ENCODE measurements at regions of chr16 and their contacts with region 1.

Region 1: DNA sequence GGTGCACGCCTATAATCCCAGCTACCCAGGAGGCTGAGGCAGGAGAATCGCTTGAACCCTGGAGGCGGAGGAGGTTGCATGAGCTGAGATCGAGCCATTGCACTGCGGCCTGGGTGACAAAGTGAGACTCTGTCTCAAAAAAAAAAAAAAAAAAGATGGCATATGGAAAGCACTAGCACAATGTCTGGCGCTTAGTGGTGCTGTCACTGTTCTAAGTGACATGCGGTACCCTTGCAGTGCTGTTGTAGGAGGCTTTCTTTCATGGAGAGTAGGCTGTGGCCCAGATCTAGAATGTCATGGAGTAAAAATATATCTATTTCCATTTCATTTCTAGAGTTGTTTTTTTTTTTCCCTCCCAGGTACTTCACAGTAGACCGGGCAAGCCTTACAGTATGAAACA is 14.6 kb upstream of the METTL9 start:
- DNase-seq: no peak
- ATAC-seq: no peak
- H3K4me3 ChIP-seq: no peak overlapping the region
- H3K4me3 Mint-ChIP-seq: no peak overlapping the region
- H3K27ac ChIP-seq: no peak overlapping the region
- H3K27ac Mint-ChIP-seq: no peak overlapping the region
- H3K4me1 ChIP-seq: peaks cover 6% of the 10 kb centered on the region
- H3K4me1 Mint-ChIP-seq: peaks cover 5% of the 10 kb centered on the region
- H3K27me3 ChIP-seq: no peaks in the 10 kb centered on the region
- H3K27me3 Mint-ChIP-seq: no peaks in the 10 kb centered on the region
- CTCF ChIP-seq: no peak

Region 2: DNA sequence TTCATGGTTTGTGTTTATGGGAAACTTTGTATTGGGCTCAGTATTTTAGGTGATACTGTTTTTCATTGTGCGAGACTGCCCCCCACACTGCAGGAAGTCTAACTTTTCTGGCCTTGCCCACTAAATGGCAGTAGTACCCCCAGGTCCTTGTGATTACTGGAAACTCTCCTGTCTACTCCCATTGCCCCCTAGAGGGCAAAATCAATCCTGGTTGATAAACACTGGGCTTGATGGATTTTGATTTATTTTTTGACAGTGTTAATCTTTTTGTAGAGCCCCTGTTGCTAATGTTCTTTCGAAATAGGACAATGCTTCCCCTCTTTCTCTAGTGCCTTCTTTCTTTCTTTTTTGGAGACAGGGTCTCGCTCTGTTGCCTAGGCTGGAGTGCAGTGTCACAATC is 30.1 kb after region 1 on chr16:
- CTCF ChIA-PET with region 1: interaction called, 3 read pairs
- POLR2A ChIA-PET with region 1: no interaction called
- intact Hi-C with region 1: loop called in 1 of 2 experiments (anchors 2 kb)
- DNase-seq: no peak
- ATAC-seq: no peak
- H3K4me3 ChIP-seq: no peak overlapping the region
- H3K4me3 Mint-ChIP-seq: no peak overlapping the region
- H3K27ac ChIP-seq: no peak overlapping the region
- H3K27ac Mint-ChIP-seq: no peak overlapping the region
- H3K4me1 ChIP-seq: peaks cover 28% of the 10 kb centered on the region
- H3K4me1 Mint-ChIP-seq: peaks cover 66% of the 10 kb centered on the region
- H3K27me3 ChIP-seq: no peaks in the 10 kb centered on the region
- H3K27me3 Mint-ChIP-seq: no peaks in the 10 kb centered on the region
- CTCF ChIP-seq: no peak

Region 3: DNA sequence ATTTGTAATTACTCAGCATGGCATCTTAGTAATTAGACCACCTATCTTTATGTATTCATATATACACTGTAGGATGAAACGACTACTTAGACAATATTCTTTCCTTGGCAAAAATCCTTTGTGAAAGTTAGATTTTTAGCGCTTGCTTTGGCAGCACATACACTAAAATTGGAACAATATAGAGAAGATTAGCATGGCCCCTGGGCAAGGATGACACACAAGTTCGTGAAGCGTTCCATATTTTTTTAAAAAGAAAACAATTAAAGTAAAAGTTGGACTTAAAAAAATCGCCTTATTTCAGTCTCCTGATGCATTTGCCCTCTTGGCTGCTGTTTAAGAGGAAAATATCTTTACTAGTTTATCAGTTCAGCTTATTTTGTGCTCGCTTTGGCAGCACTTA is 57.1 kb after region 1 on chr16:
- CTCF ChIA-PET with region 1: interaction called, 22 read pairs
- POLR2A ChIA-PET with region 1: interaction called, 5 read pairs
- intact Hi-C with region 1: loop called (anchors 1 kb)
- DNase-seq: no peak
- ATAC-seq: no peak
- H3K4me3 ChIP-seq: no peak overlapping the region
- H3K4me3 Mint-ChIP-seq: no peak overlapping the region
- H3K27ac ChIP-seq: no peak overlapping the region
- H3K27ac Mint-ChIP-seq: no peak overlapping the region
- H3K4me1 ChIP-seq: peaks cover 40% of the 10 kb centered on the region
- H3K4me1 Mint-ChIP-seq: peaks cover 57% of the 10 kb centered on the region
- H3K27me3 ChIP-seq: no peaks in the 10 kb centered on the region
- H3K27me3 Mint-ChIP-seq: no peaks in the 10 kb centered on the region
- CTCF ChIP-seq: no peak

Region 4: DNA sequence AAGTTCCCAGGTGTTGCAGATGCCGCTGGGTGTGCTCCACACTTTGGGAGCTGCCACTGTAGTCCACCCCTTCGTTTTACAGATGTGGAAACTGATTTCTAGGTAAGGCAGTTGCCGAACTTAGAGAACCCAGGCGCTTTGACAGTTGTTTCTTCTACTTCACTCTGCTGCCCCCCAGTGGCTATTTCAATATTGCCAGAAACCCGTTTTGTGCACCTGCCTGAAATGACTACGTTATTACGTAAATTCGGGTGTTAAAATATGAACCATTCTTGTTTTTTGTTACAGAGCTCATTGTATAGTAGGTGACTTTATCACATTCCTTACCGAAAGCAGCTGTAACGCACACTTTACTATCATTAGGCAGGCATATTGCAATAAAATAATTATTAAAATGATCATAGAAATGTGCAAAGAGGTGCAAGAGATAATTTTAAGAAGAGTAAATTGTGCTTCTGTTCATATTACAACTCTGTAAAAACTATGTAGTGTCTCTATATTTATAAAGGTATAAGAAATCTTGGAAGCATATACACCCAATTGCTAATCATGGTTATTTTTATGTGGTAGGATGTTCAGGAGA is 123.8 kb after region 1 on chr16:
- CTCF ChIA-PET with region 1: interaction called, 8 read pairs
- POLR2A ChIA-PET with region 1: no interaction called
- intact Hi-C with region 1: loop called (anchors 1 kb)
- DNase-seq: peak; percentile 71 to 93 (median 85)
- ATAC-seq: peak; percentile 84
- H3K4me3 ChIP-seq: no peak overlapping the region
- H3K4me3 Mint-ChIP-seq: no peak overlapping the region
- H3K27ac ChIP-seq: no peak overlapping the region
- H3K27ac Mint-ChIP-seq: no peak overlapping the region
- H3K4me1 ChIP-seq: peaks cover 3% of the 10 kb centered on the region
- H3K4me1 Mint-ChIP-seq: peaks cover 5% of the 10 kb centered on the region
- H3K27me3 ChIP-seq: no peaks in the 10 kb centered on the region
- H3K27me3 Mint-ChIP-seq: no peaks in the 10 kb centered on the region
- CTCF ChIP-seq: peak; percentile 88

Region 5: GRCh38 chr16:22705799-22706198 is 1121.0 kb after region 1 on chr16:
- CTCF ChIA-PET with region 1: no interaction called
- POLR2A ChIA-PET with region 1: no interaction called
- intact Hi-C with region 1: no loop called
- DNase-seq: no peak
- ATAC-seq: no peak
- H3K4me3 ChIP-seq: no peak overlapping the region
- H3K4me3 Mint-ChIP-seq: no peak overlapping the region
- H3K27ac ChIP-seq: no peak overlapping the region
- H3K27ac Mint-ChIP-seq: no peak overlapping the region
- H3K4me1 ChIP-seq: no peaks in the 10 kb centered on the region
- H3K4me1 Mint-ChIP-seq: no peaks in the 10 kb centered on the region
- H3K27me3 ChIP-seq: peaks cover 0 to 5% of the 10 kb centered on the region in 2 experiments
- H3K27me3 Mint-ChIP-seq: peaks cover 25% of the 10 kb centered on the region
- CTCF ChIP-seq: no peak

Measured in CD4-positive, alpha-beta T cell (primary cell).